CD8-positive, alpha-beta T cell (primary cell): ENCODE measurements at regions of chr4 and their contacts with region 1.

Region 1: GRCh38 chr4:3292571-3293400 is at the start of gene RGS12:
- DNase-seq: peak; percentile 58 to 89 (median 78)
- ATAC-seq: peak; percentile 82
- H3K4me3 ChIP-seq: peak within 1 kb of the TSS; percentile 67 to 79
- H3K4me3 Mint-ChIP-seq: peak within 1 kb of the TSS; percentile 89
- H3K27ac ChIP-seq: no peak within 1 kb of the TSS
- H3K27ac Mint-ChIP-seq: peak within 1 kb of the TSS; percentile 82
- H3K4me1 ChIP-seq: peaks cover 14% of the 10 kb centered on the region
- H3K4me1 Mint-ChIP-seq: peaks cover 18% of the 10 kb centered on the region
- H3K27me3 ChIP-seq: peaks cover 0 to 4% of the 10 kb centered on the region in 2 experiments
- H3K27me3 Mint-ChIP-seq: peaks cover 20% of the 10 kb centered on the region
- CTCF ChIP-seq: no peak
- total RNA-seq, gene RGS12: 4.4 to 7.6 TPM

Region 2: GRCh38 chr4:3201718-3202702 is 90.8 kb before region 1 on chr4:
- CTCF ChIA-PET with region 1: interaction called, 3 read pairs
- POLR2A ChIA-PET with region 1: no interaction called
- intact Hi-C with region 1: loop called (anchors 2 kb)
- DNase-seq: peak; percentile 36 to 92 (median 77)
- ATAC-seq: peak; percentile 95
- H3K4me3 ChIP-seq: peak overlapping the region; percentile 10 to 31
- H3K4me3 Mint-ChIP-seq: peak overlapping the region; percentile 70
- H3K27ac ChIP-seq: peak overlapping the region in 1 of 2 experiments; percentile 81
- H3K27ac Mint-ChIP-seq: peak overlapping the region; percentile 74
- H3K4me1 ChIP-seq: peaks cover 43% of the 10 kb centered on the region
- H3K4me1 Mint-ChIP-seq: peaks cover 56% of the 10 kb centered on the region
- H3K27me3 ChIP-seq: no peaks in the 10 kb centered on the region
- H3K27me3 Mint-ChIP-seq: no peaks in the 10 kb centered on the region
- CTCF ChIP-seq: no peak

Region 3: GRCh38 chr4:3305598-3306371 is 13.0 kb after region 1 on chr4:
- CTCF ChIA-PET with region 1: no interaction called
- POLR2A ChIA-PET with region 1: interaction called, 4 read pairs
- intact Hi-C with region 1: loop called (anchors 1 kb)
- DNase-seq: peak in 2 of 9 experiments; percentile 38 to 45
- ATAC-seq: no peak
- H3K4me3 ChIP-seq: peak overlapping the region in 1 of 2 experiments; percentile 5
- H3K4me3 Mint-ChIP-seq: no peak overlapping the region
- H3K27ac ChIP-seq: no peak overlapping the region
- H3K27ac Mint-ChIP-seq: peak overlapping the region; percentile 64
- H3K4me1 ChIP-seq: peaks cover 48% of the 10 kb centered on the region
- H3K4me1 Mint-ChIP-seq: peaks cover 56% of the 10 kb centered on the region
- H3K27me3 ChIP-seq: peaks cover 0 to 2% of the 10 kb centered on the region in 2 experiments
- H3K27me3 Mint-ChIP-seq: peaks cover 17% of the 10 kb centered on the region
- CTCF ChIP-seq: no peak

Region 4: GRCh38 chr4:3461478-3462291 is 168.9 kb after region 1 on chr4:
- CTCF ChIA-PET with region 1: no interaction called
- POLR2A ChIA-PET with region 1: no interaction called
- intact Hi-C with region 1: no loop called
- DNase-seq: no peak
- ATAC-seq: no peak
- H3K4me3 ChIP-seq: no peak overlapping the region
- H3K4me3 Mint-ChIP-seq: no peak overlapping the region
- H3K27ac ChIP-seq: no peak overlapping the region
- H3K27ac Mint-ChIP-seq: no peak overlapping the region
- H3K4me1 ChIP-seq: no peaks in the 10 kb centered on the region
- H3K4me1 Mint-ChIP-seq: no peaks in the 10 kb centered on the region
- H3K27me3 ChIP-seq: peaks cover 3 to 11% of the 10 kb centered on the region in 2 experiments
- H3K27me3 Mint-ChIP-seq: peaks cover 25% of the 10 kb centered on the region
- CTCF ChIP-seq: no peak

Region 5: DNA sequence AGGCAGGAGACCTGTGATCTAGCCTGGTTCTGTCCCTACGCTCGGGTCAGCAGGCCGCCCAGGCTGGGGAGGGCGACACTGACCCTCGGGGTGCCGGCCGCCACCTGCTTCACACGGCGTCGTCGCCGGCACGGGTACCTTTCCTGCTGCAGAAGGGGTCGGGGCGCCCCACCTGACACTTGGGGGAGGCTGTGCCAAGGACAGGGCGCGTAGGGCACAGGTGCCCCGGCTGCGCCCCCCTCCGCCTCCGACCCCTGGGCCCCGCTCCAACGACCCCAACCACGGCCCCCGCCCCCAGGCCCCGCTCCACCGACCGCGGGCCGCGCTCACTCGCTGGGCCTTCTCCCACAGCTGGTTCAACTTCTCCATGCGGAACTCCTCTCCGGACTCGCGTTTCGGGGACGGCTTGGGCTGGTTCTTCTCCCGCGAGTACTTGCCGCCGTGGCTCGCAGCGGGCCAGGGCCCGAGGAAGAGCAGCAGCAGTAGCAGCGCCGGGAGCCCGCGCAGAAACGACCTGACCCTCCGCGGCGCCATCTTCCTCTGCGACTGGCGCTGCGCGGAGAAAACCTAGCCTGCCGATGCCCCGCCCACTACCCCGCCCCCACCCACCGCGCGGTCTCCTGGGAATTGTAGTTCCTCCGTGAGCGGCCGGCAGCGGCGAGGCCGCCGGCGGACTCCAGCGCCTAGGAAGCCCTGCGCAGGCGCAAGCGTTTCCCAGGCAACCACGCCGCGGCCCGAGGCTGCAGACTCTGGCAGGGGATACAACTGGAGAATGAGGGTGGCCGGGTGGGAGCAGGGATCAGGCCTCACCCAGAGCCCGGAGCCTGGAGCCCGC is 239.3 kb after region 1 on chr4 and contains the start of gene LRPAP1:
- CTCF ChIA-PET with region 1: no interaction called
- POLR2A ChIA-PET with region 1: no interaction called
- intact Hi-C with region 1: loop called in 1 of 2 experiments (anchors 5 kb)
- DNase-seq: peak; percentile 63 to 92 (median 86)
- ATAC-seq: peak; percentile 94
- H3K4me3 ChIP-seq: peak within 1 kb of the TSS; percentile 90 to 93
- H3K4me3 Mint-ChIP-seq: peak within 1 kb of the TSS; percentile 98
- H3K27ac ChIP-seq: peak within 1 kb of the TSS; percentile 58 to 76
- H3K27ac Mint-ChIP-seq: peak within 1 kb of the TSS; percentile 96
- H3K4me1 ChIP-seq: peaks cover 35% of the 10 kb centered on the region
- H3K4me1 Mint-ChIP-seq: peaks cover 39% of the 10 kb centered on the region
- H3K27me3 ChIP-seq: no peaks in the 10 kb centered on the region
- H3K27me3 Mint-ChIP-seq: no peaks in the 10 kb centered on the region
- CTCF ChIP-seq: no peak
- total RNA-seq, gene LRPAP1: 94.6 to 97.4 TPM